Testis (tissue), 5 donors: ENCODE measurements at regions of chr18 and their contacts with region 1.

Region 1: GRCh38 chr18:22494771-22495170 is 77.1 kb upstream of the CTAGE1 start:
- DNase-seq: no peak
- H3K4me3 ChIP-seq: no peak overlapping the region
- H3K27ac ChIP-seq: no peak overlapping the region
- H3K4me1 ChIP-seq: no peaks in the 10 kb centered on the region
- H3K27me3 ChIP-seq: no peaks in the 10 kb centered on the region
- CTCF ChIP-seq: no peak
- POLR2A ChIP-seq: no peak

Region 2: GRCh38 chr18:22143347-22144340 is 351.1 kb before region 1 on chr18:
- intact Hi-C with region 1: no loop called
- DNase-seq: no peak
- H3K4me3 ChIP-seq: no peak overlapping the region
- H3K27ac ChIP-seq: no peak overlapping the region
- H3K4me1 ChIP-seq: no peaks in the 10 kb centered on the region
- H3K27me3 ChIP-seq: no peaks in the 10 kb centered on the region
- CTCF ChIP-seq: no peak
- POLR2A ChIP-seq: no peak

Region 3: GRCh38 chr18:22542401-22542835 is 47.6 kb after region 1 on chr18:
- intact Hi-C with region 1: loop called (anchors 10 kb)
- DNase-seq: peak; percentile 41
- H3K4me3 ChIP-seq: no peak overlapping the region
- H3K27ac ChIP-seq: no peak overlapping the region
- H3K4me1 ChIP-seq: peaks cover 25% of the 10 kb centered on the region
- H3K27me3 ChIP-seq: no peaks in the 10 kb centered on the region
- CTCF ChIP-seq: no peak
- POLR2A ChIP-seq: no peak